Activated naive CD4-positive, alpha-beta T cell treated with anti-CD3 and anti-CD28 coated beads for 36 hours (primary cell): ENCODE measurements at regions of chr7 and their contacts with region 1.

Region 1: GRCh38 chr7:16918288-16918895 is 36.6 kb upstream of the AGR3 start:
- DNase-seq: peak; percentile 50
- H3K4me3 Mint-ChIP-seq: no peak overlapping the region
- H3K27ac Mint-ChIP-seq: no peak overlapping the region
- H3K4me1 Mint-ChIP-seq: peaks cover 7% of the 10 kb centered on the region
- H3K27me3 Mint-ChIP-seq: no peaks in the 10 kb centered on the region

Region 2: DNA sequence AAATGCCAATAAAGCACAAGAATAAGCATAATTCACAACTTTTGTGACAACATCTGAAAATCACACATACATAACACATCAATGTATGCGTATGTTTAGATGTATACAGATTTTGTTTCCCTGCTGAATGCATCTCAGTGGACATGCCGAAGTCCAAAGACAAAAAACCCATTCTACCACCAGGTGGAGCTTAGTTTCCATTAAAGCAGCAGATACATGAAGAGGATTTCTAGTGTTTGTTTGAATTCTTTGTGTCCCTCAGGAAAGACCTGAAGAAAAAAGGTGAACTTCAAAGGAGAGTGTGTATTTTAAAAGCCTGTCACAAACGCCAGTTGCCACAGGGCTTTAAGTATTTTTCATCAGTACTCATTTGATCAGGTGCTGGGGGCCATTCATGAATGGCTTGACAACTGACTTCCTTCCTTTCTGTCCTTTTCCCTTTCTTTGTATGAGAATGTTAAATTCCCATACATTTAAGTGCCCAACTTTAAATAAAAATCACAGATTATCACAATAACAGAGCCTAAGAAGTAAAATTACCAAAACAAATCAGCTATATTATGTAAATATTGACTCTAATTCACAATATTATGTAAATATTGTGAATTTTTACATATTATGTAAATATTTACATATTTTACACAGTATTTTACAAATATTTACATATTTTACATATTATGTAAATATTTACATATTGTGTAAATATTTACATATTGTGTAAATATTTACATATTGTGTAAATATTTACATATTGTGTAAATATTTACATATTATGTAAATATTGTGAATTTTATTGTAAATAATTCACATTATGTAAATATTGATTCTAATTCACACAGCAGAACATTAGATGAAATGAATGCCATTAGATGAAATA is 840.1 kb before region 1 on chr7:
- CTCF ChIA-PET with region 1: interaction called, 3 read pairs
- intact Hi-C with region 1: loop called (anchors 1 kb)
- DNase-seq: peak; percentile 30
- H3K4me3 Mint-ChIP-seq: no peak overlapping the region
- H3K27ac Mint-ChIP-seq: no peak overlapping the region
- H3K4me1 Mint-ChIP-seq: no peaks in the 10 kb centered on the region
- H3K27me3 Mint-ChIP-seq: no peaks in the 10 kb centered on the region

Region 3: GRCh38 chr7:16431646-16432424 is 486.6 kb before region 1 on chr7:
- CTCF ChIA-PET with region 1: interaction called, 3 read pairs
- intact Hi-C with region 1: loop called (anchors 1 kb)
- DNase-seq: peak; percentile 54
- H3K4me3 Mint-ChIP-seq: no peak overlapping the region
- H3K27ac Mint-ChIP-seq: no peak overlapping the region
- H3K4me1 Mint-ChIP-seq: no peaks in the 10 kb centered on the region
- H3K27me3 Mint-ChIP-seq: no peaks in the 10 kb centered on the region

Region 4: DNA sequence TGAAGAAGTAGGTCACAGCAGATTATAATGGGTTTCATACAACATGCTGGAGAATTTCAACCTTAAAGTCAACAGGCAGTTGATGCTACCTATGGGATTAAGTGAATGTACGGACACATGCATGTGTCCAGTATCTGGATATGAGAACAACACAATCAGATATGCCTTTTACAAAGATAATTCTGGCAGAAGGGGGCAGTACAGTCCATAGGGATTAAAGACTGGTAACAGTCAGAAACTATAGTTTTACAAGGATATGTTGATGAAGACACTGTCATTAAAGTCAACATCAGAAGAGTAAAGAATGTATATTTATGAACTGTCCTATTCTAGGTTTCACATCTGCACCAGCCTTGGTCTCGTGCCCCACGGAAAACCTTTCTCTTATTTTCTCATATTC is 314.3 kb before region 1 on chr7:
- CTCF ChIA-PET with region 1: interaction called, 8 read pairs
- intact Hi-C with region 1: loop called (anchors 1 kb)
- DNase-seq: no peak
- H3K4me3 Mint-ChIP-seq: no peak overlapping the region
- H3K27ac Mint-ChIP-seq: no peak overlapping the region
- H3K4me1 Mint-ChIP-seq: no peaks in the 10 kb centered on the region
- H3K27me3 Mint-ChIP-seq: no peaks in the 10 kb centered on the region

Region 5: GRCh38 chr7:16695621-16696237 is 222.7 kb before region 1 on chr7:
- CTCF ChIA-PET with region 1: no interaction called
- intact Hi-C with region 1: loop called (anchors 1 kb)
- DNase-seq: peak; percentile 11
- H3K4me3 Mint-ChIP-seq: no peak overlapping the region
- H3K27ac Mint-ChIP-seq: no peak overlapping the region
- H3K4me1 Mint-ChIP-seq: peaks cover 10% of the 10 kb centered on the region
- H3K27me3 Mint-ChIP-seq: no peaks in the 10 kb centered on the region

Region 6: GRCh38 chr7:16801111-16801542 is 117.3 kb before region 1 on chr7:
- CTCF ChIA-PET with region 1: interaction called, 24 read pairs
- intact Hi-C with region 1: loop called (anchors 1 kb)
- DNase-seq: no peak
- H3K4me3 Mint-ChIP-seq: no peak overlapping the region
- H3K27ac Mint-ChIP-seq: no peak overlapping the region
- H3K4me1 Mint-ChIP-seq: no peaks in the 10 kb centered on the region
- H3K27me3 Mint-ChIP-seq: peaks cover 5% of the 10 kb centered on the region

Region 7: GRCh38 chr7:16891338-16891737 is 27.1 kb before region 1 on chr7:
- CTCF ChIA-PET with region 1: interaction called, 16 read pairs
- intact Hi-C with region 1: loop called (anchors 1 kb)
- DNase-seq: peak; percentile 21
- H3K4me3 Mint-ChIP-seq: no peak overlapping the region
- H3K27ac Mint-ChIP-seq: no peak overlapping the region
- H3K4me1 Mint-ChIP-seq: peaks cover 5% of the 10 kb centered on the region
- H3K27me3 Mint-ChIP-seq: no peaks in the 10 kb centered on the region